Mammary epithelial cell (primary cell): ENCODE measurements at regions of chr10 and their contacts with region 1.

Region 1: DNA sequence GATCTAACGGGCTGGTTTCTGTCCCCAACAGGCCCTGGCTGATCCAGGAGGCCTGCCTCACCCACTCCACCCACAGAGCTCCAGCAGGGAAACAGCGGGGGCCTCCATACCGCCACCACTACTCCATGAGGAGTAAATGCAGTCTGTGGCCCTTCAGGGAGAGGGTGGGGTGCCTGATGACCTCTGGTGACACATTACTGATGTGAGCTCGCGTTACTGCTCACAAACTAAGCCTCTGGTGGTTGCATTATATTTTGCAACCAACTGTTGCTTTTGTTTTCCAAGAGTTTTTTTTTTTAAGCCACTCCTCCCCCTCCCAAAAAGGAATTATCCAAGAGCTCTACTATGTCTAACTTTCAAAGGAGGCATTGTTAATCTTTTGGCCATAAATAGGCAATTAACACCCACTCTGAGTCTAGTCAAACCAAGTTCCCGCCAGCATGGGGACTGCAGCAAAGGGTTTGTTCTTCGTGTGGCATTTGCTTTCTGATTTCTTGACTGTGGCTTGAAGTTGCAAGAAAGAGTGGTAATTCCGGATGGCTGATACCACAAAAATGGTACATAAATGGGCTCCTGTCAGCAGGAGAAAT is 72.6 kb downstream of the FAM53B start:
- DNase-seq: peak; percentile 72
- H3K4me3 ChIP-seq: no peak overlapping the region
- H3K27ac ChIP-seq: no peak overlapping the region
- H3K4me1 ChIP-seq: peaks cover 17% of the 10 kb centered on the region
- H3K27me3 ChIP-seq: no peaks in the 10 kb centered on the region
- CTCF ChIP-seq: peak; percentile 48 to 57

Region 2: GRCh38 chr10:124565565-124566256 is 105.9 kb before region 1 on chr10:
- CTCF ChIA-PET with region 1: no interaction called
- dilution Hi-C with region 1: no loop called
- in situ Hi-C with region 1: no loop called
- intact Hi-C with region 1: no loop called
- DNase-seq: no peak
- H3K4me3 ChIP-seq: no peak overlapping the region
- H3K27ac ChIP-seq: no peak overlapping the region
- H3K4me1 ChIP-seq: peaks cover 3% of the 10 kb centered on the region
- H3K27me3 ChIP-seq: no peaks in the 10 kb centered on the region
- CTCF ChIP-seq: peak; percentile 31 to 35

Region 3: GRCh38 chr10:124588736-124589490 is 82.7 kb before region 1 on chr10:
- CTCF ChIA-PET with region 1: no interaction called
- dilution Hi-C with region 1: loop called (anchors 5 kb)
- in situ Hi-C with region 1: no loop called
- intact Hi-C with region 1: no loop called
- DNase-seq: no peak
- H3K4me3 ChIP-seq: no peak overlapping the region
- H3K27ac ChIP-seq: no peak overlapping the region
- H3K4me1 ChIP-seq: no peaks in the 10 kb centered on the region
- H3K27me3 ChIP-seq: peaks cover 4% of the 10 kb centered on the region
- CTCF ChIP-seq: no peak

Region 4: GRCh38 chr10:124632064-124632531 is 39.5 kb before region 1 on chr10:
- CTCF ChIA-PET with region 1: no interaction called
- dilution Hi-C with region 1: no loop called
- in situ Hi-C with region 1: no loop called
- intact Hi-C with region 1: loop called (anchors 5 kb)
- DNase-seq: peak; percentile 82
- H3K4me3 ChIP-seq: peak overlapping the region in 1 of 3 experiments; percentile 19
- H3K27ac ChIP-seq: peak overlapping the region; percentile 78
- H3K4me1 ChIP-seq: peaks cover 33% of the 10 kb centered on the region
- H3K27me3 ChIP-seq: no peaks in the 10 kb centered on the region
- CTCF ChIP-seq: peak; percentile 43 to 79

Region 5: DNA sequence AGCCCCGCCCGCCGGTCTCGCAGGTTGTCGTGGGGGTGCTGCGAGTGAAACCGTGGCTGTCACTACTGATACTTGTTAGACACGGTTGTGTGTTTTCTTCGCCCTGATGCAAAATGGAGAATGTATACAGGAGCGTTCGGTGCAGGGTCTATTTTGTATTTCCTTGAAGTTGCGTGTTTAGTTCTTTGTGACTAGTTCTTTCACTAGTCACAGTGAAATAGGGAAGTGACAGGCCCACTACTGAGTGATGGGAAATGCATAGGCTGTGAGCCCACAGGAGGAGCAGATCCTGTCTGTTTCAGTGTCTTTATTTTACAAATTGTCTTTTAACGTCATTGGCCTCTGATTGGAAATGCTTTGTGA is 130.7 kb after region 1 on chr10:
- CTCF ChIA-PET with region 1: no interaction called
- dilution Hi-C with region 1: no loop called
- in situ Hi-C with region 1: no loop called
- intact Hi-C with region 1: no loop called
- DNase-seq: no peak
- H3K4me3 ChIP-seq: peak overlapping the region; percentile 62 to 79 (median 76)
- H3K27ac ChIP-seq: peak overlapping the region; percentile 89
- H3K4me1 ChIP-seq: no peaks in the 10 kb centered on the region
- H3K27me3 ChIP-seq: no peaks in the 10 kb centered on the region
- CTCF ChIP-seq: no peak